Posterior vena cava (tissue), 2 donors: ENCODE measurements at regions of chr7 and their contacts with region 1.

Region 1: DNA sequence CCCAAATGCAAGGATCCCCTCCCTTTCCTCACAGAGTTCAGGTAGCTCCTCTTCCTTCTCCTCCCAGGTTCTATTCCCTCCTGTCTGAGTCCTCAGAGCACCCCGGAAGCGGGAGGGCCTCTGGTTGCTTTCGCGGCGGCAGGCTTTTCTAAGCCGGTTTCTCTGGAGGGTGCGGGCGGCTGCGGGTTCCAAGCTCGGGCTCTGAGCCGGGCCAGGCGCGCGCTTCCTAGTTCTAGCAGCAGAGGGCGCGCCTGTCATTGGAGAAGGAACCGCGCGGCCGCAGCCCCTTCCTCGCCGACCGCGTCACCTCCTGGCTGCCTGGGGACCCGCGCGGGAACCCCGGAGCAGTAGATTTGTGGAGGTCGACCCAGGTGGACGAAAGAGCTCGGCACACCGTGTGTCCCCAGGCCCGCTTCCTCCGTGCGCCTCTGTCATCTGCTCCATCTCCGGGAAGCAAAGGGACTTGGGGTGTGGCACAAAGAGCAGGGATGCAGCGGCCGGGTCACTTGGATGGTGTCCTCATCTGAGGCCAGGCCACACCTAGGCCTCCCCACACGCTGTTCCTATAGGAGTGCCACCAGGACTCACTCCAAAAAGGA is 389.0 kb upstream of the PODXL start:
- DNase-seq: peak; percentile 83

Region 2: GRCh38 chr7:131890176-131890575 is 55.2 kb before region 1 on chr7:
- intact Hi-C with region 1: no loop called
- DNase-seq: no peak

Region 3: DNA sequence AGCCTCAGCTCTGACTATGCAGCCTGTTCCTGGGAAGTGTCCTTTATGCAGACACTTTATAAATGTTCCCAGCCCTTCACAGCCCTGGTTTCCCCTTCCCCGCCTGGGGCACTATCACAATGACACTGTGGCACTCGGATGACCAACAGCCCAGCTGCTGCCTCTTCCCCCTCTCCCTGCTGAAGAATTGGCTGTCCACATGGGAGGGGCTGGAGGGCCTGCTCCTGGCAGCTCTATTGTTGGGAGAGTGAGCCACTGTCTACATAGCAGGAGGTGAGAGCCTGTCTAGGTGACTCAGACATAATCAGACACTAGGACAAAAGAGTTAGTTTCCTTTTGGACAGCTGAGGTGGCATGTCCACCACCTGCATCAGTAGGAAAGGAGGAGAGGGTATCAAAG is 193.4 kb after region 1 on chr7:
- intact Hi-C with region 1: loop called (anchors 10 kb)
- DNase-seq: no peak

Region 4: DNA sequence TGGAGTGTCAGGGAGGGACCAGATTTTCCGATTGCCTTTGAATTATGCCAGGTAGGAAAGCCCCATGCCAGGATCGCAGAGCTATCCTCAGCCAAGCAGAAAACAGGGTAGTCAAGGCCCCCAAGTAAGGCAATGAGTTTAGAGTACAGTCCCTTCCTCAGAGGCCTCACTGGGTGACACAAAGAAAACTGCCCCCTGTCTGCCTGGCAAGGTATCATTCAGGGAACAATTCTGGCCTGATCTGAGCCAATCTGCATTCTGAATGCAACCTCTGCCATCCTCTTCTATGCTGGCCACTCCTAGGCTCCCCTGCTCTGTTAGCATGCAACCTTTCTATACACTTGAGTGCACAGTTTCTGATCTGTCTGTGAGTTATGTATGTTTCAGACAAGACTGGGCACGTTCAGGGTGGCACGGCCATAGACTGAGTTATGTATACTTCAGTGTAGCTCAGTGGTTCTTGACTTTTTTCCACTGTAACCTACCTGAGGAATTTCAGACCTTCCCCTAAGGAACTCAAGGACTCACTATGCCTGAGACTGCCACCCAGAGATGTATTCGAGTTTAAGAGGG is 294.1 kb after region 1 on chr7:
- intact Hi-C with region 1: loop called in 1 of 2 experiments (anchors 10 kb)
- DNase-seq: no peak